HepG2 (cell line): ENCODE measurements at regions of chr5 and their contacts with region 1.

Region 1: DNA sequence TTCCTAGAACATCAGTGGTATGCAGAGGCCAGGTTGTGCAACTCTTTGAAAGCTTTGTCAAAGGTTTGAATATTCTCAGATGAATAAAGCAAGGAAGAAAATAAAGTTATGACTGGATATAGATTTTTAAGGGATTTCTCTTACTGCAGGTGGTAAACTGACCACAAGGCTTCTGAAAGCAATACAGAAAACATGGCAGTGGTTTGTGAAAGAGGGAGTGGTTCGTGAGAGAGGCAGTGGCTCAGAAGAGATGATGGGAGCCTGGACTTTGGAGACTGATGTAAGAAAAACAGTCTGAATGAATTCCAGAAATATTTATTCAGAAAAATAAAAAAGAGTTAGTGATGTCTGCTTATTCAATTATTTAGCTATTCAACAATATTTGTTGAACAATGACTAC is 380.4 kb upstream of the CTNND2 start:
- DNase-seq: no peak
- ATAC-seq: no peak
- H3K4me3 ChIP-seq: no peak overlapping the region
- H3K27ac ChIP-seq: no peak overlapping the region
- H3K4me1 ChIP-seq: no peaks in the 10 kb centered on the region
- H3K27me3 ChIP-seq: no peaks in the 10 kb centered on the region
- CTCF ChIP-seq: no peak
- EP300 ChIP-seq: no peak
- POLR2A ChIP-seq: no peak
- RAD21 ChIP-seq: no peak

Region 2: DNA sequence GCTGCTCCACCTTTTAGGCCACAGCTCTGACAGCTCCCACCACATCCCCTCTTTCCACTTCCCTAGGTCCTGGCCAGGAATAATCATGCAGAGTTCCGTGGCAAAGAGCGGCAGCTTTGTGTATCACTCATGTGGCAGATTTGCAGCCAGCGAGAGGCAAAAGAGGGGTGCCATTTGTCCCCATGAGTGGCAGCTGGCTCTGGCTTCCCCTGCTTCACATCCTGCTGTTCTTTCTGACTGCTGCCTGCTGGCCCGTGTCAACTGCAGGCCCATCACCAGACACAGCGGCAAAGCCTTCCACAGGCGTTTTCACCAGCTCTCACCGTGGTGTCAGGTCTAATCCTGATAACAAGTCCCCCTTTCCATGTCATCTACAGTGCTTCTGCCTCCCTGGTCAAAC is 1092.9 kb before region 1 on chr5:
- CTCF ChIA-PET with region 1: no interaction called
- POLR2A ChIA-PET with region 1: no interaction called
- in situ Hi-C with region 1: no loop called
- intact Hi-C with region 1: loop called (anchors 10 kb)
- DNase-seq: no peak
- ATAC-seq: no peak
- H3K4me3 ChIP-seq: no peak overlapping the region
- H3K27ac ChIP-seq: no peak overlapping the region
- H3K4me1 ChIP-seq: no peaks in the 10 kb centered on the region
- H3K27me3 ChIP-seq: no peaks in the 10 kb centered on the region
- CTCF ChIP-seq: no peak
- EP300 ChIP-seq: no peak
- POLR2A ChIP-seq: no peak
- RAD21 ChIP-seq: no peak

Region 3: DNA sequence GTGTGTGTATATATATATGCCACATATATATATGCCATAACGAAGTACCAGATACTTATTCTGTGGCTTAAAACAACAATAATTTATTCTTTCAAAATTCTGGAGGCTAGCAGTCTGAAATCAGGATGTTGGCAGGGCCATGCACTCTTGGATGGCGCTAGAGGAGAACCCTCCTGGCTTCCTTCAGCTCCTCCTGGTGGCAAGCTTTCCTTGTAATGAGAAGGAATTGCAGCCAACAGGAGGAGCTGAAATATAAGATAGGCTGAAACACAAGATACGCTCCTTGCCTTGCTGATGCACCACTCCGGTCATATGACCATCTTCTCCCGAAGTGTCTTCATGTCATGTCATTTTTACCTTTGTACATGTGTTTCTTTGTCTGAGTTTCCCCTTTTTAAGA is 12.2 kb before region 1 on chr5:
- CTCF ChIA-PET with region 1: no interaction called
- POLR2A ChIA-PET with region 1: no interaction called
- in situ Hi-C with region 1: no loop called
- intact Hi-C with region 1: no loop called
- DNase-seq: no peak
- ATAC-seq: no peak
- H3K4me3 ChIP-seq: no peak overlapping the region
- H3K27ac ChIP-seq: no peak overlapping the region
- H3K4me1 ChIP-seq: no peaks in the 10 kb centered on the region
- H3K27me3 ChIP-seq: no peaks in the 10 kb centered on the region
- CTCF ChIP-seq: no peak
- EP300 ChIP-seq: no peak
- POLR2A ChIP-seq: no peak
- RAD21 ChIP-seq: no peak